Transverse colon (tissue), 4 donors: ENCODE measurements at regions of chr2 and their contacts with region 1.

Region 1: DNA sequence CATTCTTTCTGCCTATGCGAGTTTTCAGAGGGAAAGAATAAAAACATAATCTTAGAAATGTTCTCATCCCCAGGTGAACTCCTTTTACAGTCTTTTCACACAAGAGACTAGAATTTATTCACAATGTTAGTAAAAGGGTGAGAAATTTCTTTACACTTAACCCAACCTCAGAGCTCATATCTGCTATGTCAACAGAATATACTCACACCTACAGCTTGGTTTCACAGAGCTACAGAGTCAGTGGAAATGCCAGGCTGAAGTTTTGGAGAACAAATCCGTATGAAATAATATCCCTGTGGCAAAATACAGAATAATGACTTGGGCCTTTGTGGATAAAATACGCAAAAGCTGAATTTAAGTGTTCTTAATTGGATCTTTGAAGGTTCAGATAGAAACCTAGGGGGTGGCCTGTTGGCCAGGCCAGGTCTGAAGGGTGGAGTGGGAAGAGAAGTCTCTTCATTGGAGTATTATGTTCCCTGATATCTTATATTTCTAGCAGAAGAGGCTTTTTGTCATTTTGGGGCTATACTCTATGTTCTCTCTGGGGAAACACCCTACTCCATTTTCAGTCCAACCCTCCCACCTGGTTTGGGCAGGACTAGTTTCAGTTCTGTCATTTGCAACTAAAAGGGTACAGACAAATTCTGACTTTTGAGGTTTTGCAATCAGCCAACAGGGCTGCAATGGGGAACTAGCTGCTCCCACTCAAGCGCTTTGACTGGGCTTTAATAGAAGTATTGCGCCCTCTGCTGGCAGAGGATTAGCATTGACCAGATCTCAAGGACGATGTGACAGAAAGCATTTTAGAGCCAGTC is 25.7 kb downstream of the FBXO48 start:
- DNase-seq: peak; percentile 86
- H3K4me3 ChIP-seq: no peak overlapping the region
- H3K27ac ChIP-seq: peak overlapping the region; percentile 15 to 30 (median 22)
- H3K4me1 ChIP-seq: peaks cover 0 to 15% (median 7%) of the 10 kb centered on the region in 4 donors
- H3K27me3 ChIP-seq: no peaks in the 10 kb centered on the region
- CTCF ChIP-seq: peak; percentile 87 to 93 (median 91)
- EP300 ChIP-seq: no peak
- POLR2A ChIP-seq: no peak

Region 2: GRCh38 chr2:68121873-68122679 is 319.3 kb before region 1 on chr2:
- in situ Hi-C with region 1: loop called in 3 of 4 experiments (anchors 10 to 25 kb)
- intact Hi-C with region 1: loop called (anchors 5 kb)
- DNase-seq: peak; percentile 90
- H3K4me3 ChIP-seq: no peak overlapping the region
- H3K27ac ChIP-seq: peak overlapping the region in 2 of 4 donors; percentile 3 to 69
- H3K4me1 ChIP-seq: peaks cover 0 to 13% (median 5%) of the 10 kb centered on the region in 4 donors
- H3K27me3 ChIP-seq: no peaks in the 10 kb centered on the region
- CTCF ChIP-seq: peak; percentile 92 to 97 (median 96)
- EP300 ChIP-seq: no peak
- POLR2A ChIP-seq: no peak

Region 3: GRCh38 chr2:68157402-68158133 is 283.8 kb before region 1 on chr2 and contains the start of gene PNO1:
- in situ Hi-C with region 1: loop called in 1 of 4 experiments (anchors 25 kb)
- intact Hi-C with region 1: no loop called
- DNase-seq: peak; percentile 97
- H3K4me3 ChIP-seq: peak within 1 kb of the TSS; percentile 65 to 91 (median 86)
- H3K27ac ChIP-seq: peak within 1 kb of the TSS; percentile 85 to 94 (median 89)
- H3K4me1 ChIP-seq: peaks cover 8 to 28% (median 22%) of the 10 kb centered on the region in 4 donors
- H3K27me3 ChIP-seq: no peaks in the 10 kb centered on the region
- CTCF ChIP-seq: peak in 1 of 5 experiments; percentile 24
- EP300 ChIP-seq: peak; percentile 19
- POLR2A ChIP-seq: peak; percentile 42
- total RNA-seq, gene PNO1: 1.9 to 20.9 (median 7.4) TPM

Region 4: DNA sequence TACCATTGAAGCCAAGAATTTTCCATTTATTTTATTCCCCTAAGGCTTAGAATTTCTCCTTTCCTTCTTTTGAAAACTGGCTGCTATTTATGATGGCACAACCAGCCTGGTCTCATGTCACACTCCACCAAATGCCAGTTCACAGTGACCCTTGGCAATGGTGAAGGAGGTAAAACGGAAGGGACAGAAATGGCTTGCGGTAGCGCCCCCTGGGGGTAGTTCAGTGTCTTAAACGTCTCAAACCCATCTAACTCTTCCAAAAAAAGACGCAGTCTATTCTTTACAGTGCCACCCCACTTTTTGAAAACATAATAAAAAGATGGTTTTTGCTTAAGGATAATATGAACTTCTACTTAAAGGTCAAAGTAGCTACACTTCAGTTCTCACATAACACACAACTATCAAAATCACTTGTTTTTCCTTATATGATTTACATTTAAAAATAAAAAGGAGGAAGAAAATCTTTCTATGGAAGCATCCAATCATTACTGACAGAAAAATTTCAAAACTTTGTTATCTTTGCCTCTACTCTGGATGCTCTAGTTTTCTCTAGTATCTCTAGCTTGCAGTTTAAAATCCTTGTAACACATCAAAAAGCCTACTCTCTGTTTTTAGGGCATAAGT is 255.7 kb before region 1 on chr2:
- in situ Hi-C with region 1: loop called in 1 of 4 experiments (anchors 25 kb)
- intact Hi-C with region 1: no loop called
- DNase-seq: peak; percentile 46
- H3K4me3 ChIP-seq: no peak overlapping the region
- H3K27ac ChIP-seq: no peak overlapping the region
- H3K4me1 ChIP-seq: peaks cover 0 to 15% (median 3%) of the 10 kb centered on the region in 4 donors
- H3K27me3 ChIP-seq: no peaks in the 10 kb centered on the region
- CTCF ChIP-seq: peak; percentile 35 to 61 (median 52)
- EP300 ChIP-seq: no peak
- POLR2A ChIP-seq: no peak

Region 5: DNA sequence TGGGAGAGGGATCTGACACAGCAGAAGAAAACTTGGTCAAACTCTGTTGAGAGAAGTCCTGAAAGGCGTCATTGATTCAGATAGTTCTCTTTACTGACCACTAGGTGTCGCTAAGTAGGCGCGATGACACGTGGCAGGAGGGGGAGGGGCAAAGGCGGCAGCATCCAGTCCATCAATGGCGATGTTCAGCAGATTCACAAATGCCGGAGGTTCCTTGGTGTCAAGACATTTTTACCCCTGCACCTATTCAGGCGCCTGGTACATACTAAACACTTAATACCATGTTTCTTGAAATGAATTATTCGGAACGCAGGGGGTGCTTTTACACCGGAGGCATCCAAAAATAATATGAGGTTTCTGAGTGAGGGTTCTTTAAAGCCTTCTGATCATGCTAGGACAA is 79.3 kb before region 1 on chr2:
- in situ Hi-C with region 1: loop called in 2 of 4 experiments (anchors 5 kb)
- intact Hi-C with region 1: no loop called
- DNase-seq: peak; percentile 81
- H3K4me3 ChIP-seq: no peak overlapping the region
- H3K27ac ChIP-seq: peak overlapping the region in 1 of 4 donors; percentile 11
- H3K4me1 ChIP-seq: no peaks in the 10 kb centered on the region
- H3K27me3 ChIP-seq: no peaks in the 10 kb centered on the region
- CTCF ChIP-seq: peak; percentile 74 to 82 (median 77)
- EP300 ChIP-seq: no peak
- POLR2A ChIP-seq: no peak

Region 6: GRCh38 chr2:69118609-69119008 is 677.2 kb after region 1 on chr2:
- in situ Hi-C with region 1: no loop called
- intact Hi-C with region 1: no loop called
- DNase-seq: no peak
- H3K4me3 ChIP-seq: no peak overlapping the region
- H3K27ac ChIP-seq: peak overlapping the region; percentile 48 to 69 (median 60)
- H3K4me1 ChIP-seq: peaks cover 0 to 14% (median 0%) of the 10 kb centered on the region in 4 donors
- H3K27me3 ChIP-seq: no peaks in the 10 kb centered on the region
- CTCF ChIP-seq: no peak
- EP300 ChIP-seq: no peak
- POLR2A ChIP-seq: no peak